PC-3 (cell line): ENCODE measurements at regions of chr5 and their contacts with region 1.

Region 1: DNA sequence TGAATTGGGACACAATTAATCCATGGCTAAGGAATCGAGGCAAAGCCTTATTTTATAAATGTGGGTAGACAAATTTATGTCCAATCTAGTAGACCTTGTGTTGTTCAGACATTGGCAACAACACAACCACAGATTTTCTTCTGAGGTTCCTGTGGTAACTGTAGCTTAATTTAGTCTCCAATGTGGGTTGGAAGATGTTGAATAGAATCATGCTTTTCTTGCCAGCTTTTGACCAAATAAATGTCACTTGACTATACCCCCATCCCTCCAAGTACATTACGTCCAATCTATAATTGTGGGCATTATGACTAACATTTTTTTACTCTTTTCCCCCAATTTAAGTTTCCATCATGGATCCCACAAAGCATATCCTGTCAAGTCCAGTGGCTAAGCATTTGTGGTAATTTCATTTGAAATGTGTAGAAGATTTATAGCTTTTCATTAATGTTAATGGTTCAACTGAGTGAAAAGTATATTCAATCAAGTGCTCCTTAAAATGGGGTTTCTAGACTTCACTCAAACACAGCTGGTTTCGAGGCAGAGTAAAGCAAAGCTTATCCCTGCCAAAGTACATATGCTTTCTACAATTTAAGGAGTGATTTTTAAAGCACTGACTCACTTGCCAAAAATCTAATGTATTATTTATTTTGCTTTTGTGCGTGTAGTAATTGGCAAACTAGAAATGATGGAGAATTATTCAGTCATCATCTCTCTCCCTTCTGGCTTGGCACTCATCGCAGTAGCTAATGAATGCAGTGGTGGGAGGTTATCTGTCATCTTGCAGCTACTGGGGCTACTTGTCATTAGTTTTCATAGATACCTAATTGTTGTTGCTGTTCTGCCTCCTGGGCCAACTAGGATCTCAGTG is 141.9 kb downstream of the FAM174A start:
- DNase-seq: peak; percentile 77
- ATAC-seq: peak; percentile 95
- H3K4me3 ChIP-seq: no peak overlapping the region
- H3K27ac ChIP-seq: no peak overlapping the region
- H3K4me1 ChIP-seq: peaks cover 14% of the 10 kb centered on the region
- H3K27me3 ChIP-seq: no peaks in the 10 kb centered on the region
- CTCF ChIP-seq: no peak

Region 2: GRCh38 chr5:100634937-100635534 is 42.0 kb before region 1 on chr5:
- CTCF ChIA-PET with region 1: no interaction called
- POLR2A ChIA-PET with region 1: no interaction called
- intact Hi-C with region 1: loop called (anchors 1 kb)
- DNase-seq: peak; percentile 85
- ATAC-seq: peak; percentile 96
- H3K4me3 ChIP-seq: no peak overlapping the region
- H3K27ac ChIP-seq: peak overlapping the region; percentile 38
- H3K4me1 ChIP-seq: peaks cover 15% of the 10 kb centered on the region
- H3K27me3 ChIP-seq: no peaks in the 10 kb centered on the region
- CTCF ChIP-seq: no peak

Region 3: DNA sequence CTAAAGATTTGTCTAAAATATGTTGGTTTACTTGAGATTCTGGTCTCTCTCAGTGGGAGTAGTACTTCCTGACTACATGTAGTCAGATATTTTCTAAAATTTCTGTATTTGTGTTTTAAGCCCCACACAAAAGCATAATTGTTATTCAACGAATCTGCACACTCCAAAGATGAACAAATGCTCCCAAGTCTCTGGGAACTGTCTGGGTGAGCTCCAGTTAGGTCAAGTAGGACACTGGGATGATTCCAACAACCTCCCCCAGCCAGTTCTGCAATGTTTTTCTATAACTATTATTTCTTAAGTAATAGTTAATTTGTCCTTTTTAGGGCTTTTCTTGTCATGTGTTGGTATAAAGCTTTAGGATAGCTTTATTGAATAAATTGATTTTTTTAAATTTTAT is 32.7 kb after region 1 on chr5:
- CTCF ChIA-PET with region 1: no interaction called
- POLR2A ChIA-PET with region 1: no interaction called
- intact Hi-C with region 1: loop called (anchors 2 kb)
- DNase-seq: no peak
- ATAC-seq: no peak
- H3K4me3 ChIP-seq: no peak overlapping the region
- H3K27ac ChIP-seq: no peak overlapping the region
- H3K4me1 ChIP-seq: no peaks in the 10 kb centered on the region
- H3K27me3 ChIP-seq: no peaks in the 10 kb centered on the region
- CTCF ChIP-seq: no peak

Region 4: DNA sequence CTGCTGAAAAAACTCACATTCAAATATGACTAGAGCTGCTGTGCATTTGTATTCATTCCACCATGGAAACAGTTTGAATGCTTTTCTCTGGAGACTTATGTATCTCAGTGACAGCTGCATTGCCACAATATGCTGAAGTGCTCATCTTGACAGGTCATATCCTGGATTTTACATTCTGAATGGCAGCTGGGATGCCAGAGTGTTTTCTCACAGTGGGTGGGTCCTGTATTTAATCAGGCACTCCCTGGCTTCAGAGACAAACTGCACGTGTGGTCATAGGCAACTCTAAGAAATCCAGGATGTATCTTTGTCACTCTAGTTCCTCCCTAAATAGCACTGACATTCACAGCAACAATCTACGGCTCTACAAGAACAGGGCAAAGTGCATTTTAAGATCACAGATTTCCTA is 150.4 kb after region 1 on chr5:
- CTCF ChIA-PET with region 1: no interaction called
- POLR2A ChIA-PET with region 1: no interaction called
- intact Hi-C with region 1: loop called (anchors 1 kb)
- DNase-seq: peak; percentile 94
- ATAC-seq: peak; percentile 83
- H3K4me3 ChIP-seq: peak overlapping the region; percentile 6; the same call in 1 of the 2 replicates
- H3K27ac ChIP-seq: peak overlapping the region; percentile 61
- H3K4me1 ChIP-seq: peaks cover 35% of the 10 kb centered on the region
- H3K27me3 ChIP-seq: no peaks in the 10 kb centered on the region
- CTCF ChIP-seq: no peak